Activated CD4-positive, alpha-beta T cell treated with anti-CD3 and anti-CD28 coated beads for 36 hours (primary cell): ENCODE measurements at regions of chr3 and their contacts with region 1.

Region 1: GRCh38 chr3:63967675-63968611 is 55.4 kb downstream of the PSMD6 start:
- DNase-seq: peak; percentile 54
- ATAC-seq: peak; percentile 50
- H3K4me3 Mint-ChIP-seq: peak overlapping the region; percentile 75
- H3K27ac Mint-ChIP-seq: peak overlapping the region; percentile 89
- H3K4me1 Mint-ChIP-seq: peaks cover 80% of the 10 kb centered on the region
- H3K27me3 Mint-ChIP-seq: no peaks in the 10 kb centered on the region

Region 2: GRCh38 chr3:63980835-63981498 is 13.0 kb after region 1 on chr3:
- CTCF ChIA-PET with region 1: interaction called, 117 read pairs
- POLR2A ChIA-PET with region 1: interaction called, 7 read pairs
- intact Hi-C with region 1: loop called (anchors 1 kb)
- DNase-seq: no peak
- ATAC-seq: no peak
- H3K4me3 Mint-ChIP-seq: no peak overlapping the region
- H3K27ac Mint-ChIP-seq: peak overlapping the region; percentile 62
- H3K4me1 Mint-ChIP-seq: peaks cover 85% of the 10 kb centered on the region
- H3K27me3 Mint-ChIP-seq: no peaks in the 10 kb centered on the region